Sigmoid colon (tissue), 7 donors: ENCODE measurements at regions of chr10 and their contacts with region 1.

Region 1: DNA sequence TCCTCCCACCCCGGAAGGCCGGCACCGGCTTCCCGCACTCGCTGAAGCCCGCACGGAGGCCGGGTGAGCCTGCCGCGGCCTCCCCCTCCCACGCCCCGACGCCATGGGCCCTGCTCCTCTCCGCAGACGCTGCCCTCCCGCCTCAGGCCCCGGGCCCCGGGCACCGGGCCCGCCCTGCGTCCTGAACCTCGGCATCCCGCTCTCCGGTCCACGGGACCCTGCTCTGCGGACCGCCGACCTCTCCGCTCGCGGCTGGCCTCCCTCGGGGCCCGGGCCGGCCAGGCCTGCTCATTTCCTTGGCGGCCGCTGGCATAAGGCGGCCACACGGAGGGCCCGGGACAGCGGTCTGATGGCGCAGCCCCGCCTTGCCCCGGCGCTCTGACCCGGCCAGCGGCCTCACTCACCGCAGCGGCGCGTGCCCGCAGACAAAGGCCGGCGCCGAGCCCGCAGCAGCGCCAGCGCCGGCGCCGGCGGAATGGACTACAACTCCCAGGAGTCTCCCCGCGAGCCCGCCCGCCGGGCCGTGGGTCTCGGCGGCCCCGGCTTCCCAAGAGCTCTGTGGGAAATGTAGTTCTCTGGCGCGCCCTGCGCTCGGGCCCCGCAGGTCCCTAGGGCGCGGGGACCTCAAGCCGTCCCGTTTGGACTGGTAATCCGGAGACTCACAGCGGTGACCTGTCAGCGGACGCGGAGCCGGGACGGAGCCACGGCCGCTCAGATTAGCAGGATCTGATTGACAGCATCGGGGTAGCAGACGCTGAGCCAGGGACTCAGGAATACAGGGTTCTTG is at the start of gene ZNF32:
- DNase-seq: peak; percentile 89
- H3K4me3 ChIP-seq: peak within 1 kb of the TSS; percentile 72 to 90 (median 86)
- H3K27ac ChIP-seq: peak within 1 kb of the TSS; percentile 78 to 86 (median 86)
- H3K4me1 ChIP-seq: peaks cover 0 to 17% (median 8%) of the 10 kb centered on the region in 4 donors
- H3K27me3 ChIP-seq: no peaks in the 10 kb centered on the region
- CTCF ChIP-seq: no peak
- EP300 ChIP-seq: no peak
- POLR2A ChIP-seq: no peak
- total RNA-seq, gene ZNF32: 72.1 to 108 (median 94.6) TPM

Region 2: GRCh38 chr10:43574001-43574892 is 74.3 kb before region 1 on chr10 and contains the start of gene ZNF239:
- intact Hi-C with region 1: loop called (anchors 1 kb)
- DNase-seq: peak; percentile 95
- H3K4me3 ChIP-seq: peak within 1 kb of the TSS; percentile 54 to 69 (median 64)
- H3K27ac ChIP-seq: peak within 1 kb of the TSS; percentile 68 to 81 (median 74)
- H3K4me1 ChIP-seq: peaks cover 0 to 19% (median 13%) of the 10 kb centered on the region in 4 donors
- H3K27me3 ChIP-seq: no peaks in the 10 kb centered on the region
- CTCF ChIP-seq: no peak
- EP300 ChIP-seq: no peak
- POLR2A ChIP-seq: no peak
- total RNA-seq, gene ZNF239: 4.1 to 6.2 (median 5.4) TPM

Region 3: GRCh38 chr10:43606322-43607198 is 42.0 kb before region 1 on chr10 and contains the start of gene ZNF485:
- intact Hi-C with region 1: loop called (anchors 1 kb)
- DNase-seq: peak; percentile 81
- H3K4me3 ChIP-seq: peak within 1 kb of the TSS; percentile 68 to 92 (median 85)
- H3K27ac ChIP-seq: peak within 1 kb of the TSS; percentile 62 to 77 (median 69)
- H3K4me1 ChIP-seq: peaks cover 0 to 13% (median 8%) of the 10 kb centered on the region in 4 donors
- H3K27me3 ChIP-seq: no peaks in the 10 kb centered on the region
- CTCF ChIP-seq: no peak
- EP300 ChIP-seq: no peak
- POLR2A ChIP-seq: no peak
- total RNA-seq, gene ZNF485: 2.2 to 3.8 (median 2.9) TPM

Region 4: DNA sequence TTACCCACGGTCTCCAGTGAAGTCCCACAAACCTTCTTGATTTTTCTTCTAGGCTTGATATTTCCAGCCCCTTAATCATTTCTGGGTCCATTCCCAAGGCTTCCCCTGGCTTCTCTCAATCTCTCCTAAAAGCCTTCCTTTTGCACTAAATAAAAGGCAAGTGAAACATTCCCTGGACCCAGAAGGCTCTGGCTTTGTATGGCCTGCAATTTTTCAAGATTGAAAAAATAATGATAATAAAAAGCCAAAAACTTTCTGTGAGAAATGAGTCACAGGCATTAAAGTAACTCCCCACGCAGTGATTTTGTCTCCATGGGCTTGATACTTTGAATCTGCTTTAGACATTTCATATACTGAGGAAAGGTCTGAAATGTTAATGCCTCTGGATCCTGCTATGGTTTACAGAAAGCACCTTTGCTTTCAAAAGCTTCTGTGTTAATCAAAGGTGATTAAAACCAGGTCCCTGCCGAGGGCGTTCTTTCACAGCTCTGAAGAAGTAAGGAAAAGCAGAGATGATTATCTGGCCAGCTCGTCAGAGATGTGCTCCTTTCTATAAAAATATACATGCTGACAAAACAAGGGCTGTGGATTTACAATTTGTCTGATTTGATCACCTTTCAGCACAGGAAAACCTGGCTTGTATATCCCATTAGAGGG is 1143.7 kb after region 1 on chr10:
- intact Hi-C with region 1: no loop called
- DNase-seq: no peak
- H3K4me3 ChIP-seq: no peak overlapping the region
- H3K27ac ChIP-seq: peak overlapping the region in 3 of 4 donors; percentile 18 to 62 (median 19)
- H3K4me1 ChIP-seq: peaks cover 0 to 48% (median 34%) of the 10 kb centered on the region in 4 donors
- H3K27me3 ChIP-seq: no peaks in the 10 kb centered on the region
- CTCF ChIP-seq: no peak
- EP300 ChIP-seq: peak in 1 of 4 donors; percentile 9
- POLR2A ChIP-seq: no peak